ENCODE measurements at regions of chr3 and their contacts with region 1.

Region 1: GRCh38 chr3:148379763-148380382 is 317.8 kb upstream of the AGTR1 start:
- DNase-seq: peak; percentile 23
- H3K4me3 ChIP-seq: no peak overlapping the region
- H3K27ac ChIP-seq: no peak overlapping the region
- H3K27me3 ChIP-seq: no peaks in the 10 kb centered on the region
- CTCF ChIP-seq: peak; percentile 65

Region 2: GRCh38 chr3:147890114-147890513 is 489.8 kb before region 1 on chr3:
- CTCF ChIA-PET with region 1: no interaction called
- POLR2A ChIA-PET with region 1: no interaction called
- DNase-seq: no peak
- H3K4me3 ChIP-seq: no peak overlapping the region
- H3K27ac ChIP-seq: no peak overlapping the region
- H3K27me3 ChIP-seq: no peaks in the 10 kb centered on the region
- CTCF ChIP-seq: no peak

Region 3: DNA sequence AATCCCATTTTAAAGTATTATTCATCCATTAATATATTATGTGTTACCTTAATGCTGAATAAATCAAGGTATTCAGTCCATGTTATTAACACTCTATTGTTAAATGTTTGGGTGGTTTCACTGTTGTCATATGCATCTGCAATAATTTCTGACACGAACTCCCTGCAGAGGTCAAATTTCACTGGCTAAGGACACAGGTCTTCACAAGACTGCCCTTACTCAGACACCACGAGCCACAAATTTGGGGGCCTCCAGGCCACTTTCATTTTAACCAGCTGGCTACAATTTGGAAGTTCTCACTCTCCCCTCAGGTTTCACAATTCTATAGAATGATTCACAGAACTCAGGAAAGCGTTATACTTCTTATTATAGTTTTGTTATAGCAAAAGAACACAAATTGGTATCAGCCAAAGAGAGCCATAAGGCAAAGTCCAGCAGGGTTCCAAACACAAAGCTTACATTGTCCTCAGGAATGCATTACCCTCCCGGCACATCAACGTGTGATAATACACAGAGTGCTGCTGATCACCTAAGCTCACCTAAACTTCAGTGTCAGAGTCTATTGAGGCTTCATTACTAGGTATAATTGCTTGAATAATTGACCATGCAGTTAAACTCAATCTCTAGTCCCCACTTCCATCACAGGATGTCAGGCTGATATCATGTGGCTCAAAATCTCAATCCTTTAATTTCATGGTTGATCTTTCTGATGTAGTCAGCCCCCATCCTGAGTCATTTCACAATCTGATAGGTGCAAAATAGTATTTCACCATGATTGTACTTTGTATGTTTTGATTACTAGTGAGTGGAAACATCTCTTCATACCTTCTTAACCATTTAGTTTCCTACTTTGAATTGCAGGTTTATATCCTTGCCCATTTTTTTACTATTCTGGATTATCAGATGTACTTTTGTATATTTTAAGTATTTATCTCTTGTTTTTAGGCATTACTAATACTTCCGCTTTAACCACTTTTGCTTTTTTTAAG is 123.6 kb before region 1 on chr3:
- CTCF ChIA-PET with region 1: no interaction called
- POLR2A ChIA-PET with region 1: no interaction called
- DNase-seq: no peak
- H3K4me3 ChIP-seq: no peak overlapping the region
- H3K27ac ChIP-seq: no peak overlapping the region
- H3K27me3 ChIP-seq: no peaks in the 10 kb centered on the region
- CTCF ChIP-seq: no peak

Region 4: DNA sequence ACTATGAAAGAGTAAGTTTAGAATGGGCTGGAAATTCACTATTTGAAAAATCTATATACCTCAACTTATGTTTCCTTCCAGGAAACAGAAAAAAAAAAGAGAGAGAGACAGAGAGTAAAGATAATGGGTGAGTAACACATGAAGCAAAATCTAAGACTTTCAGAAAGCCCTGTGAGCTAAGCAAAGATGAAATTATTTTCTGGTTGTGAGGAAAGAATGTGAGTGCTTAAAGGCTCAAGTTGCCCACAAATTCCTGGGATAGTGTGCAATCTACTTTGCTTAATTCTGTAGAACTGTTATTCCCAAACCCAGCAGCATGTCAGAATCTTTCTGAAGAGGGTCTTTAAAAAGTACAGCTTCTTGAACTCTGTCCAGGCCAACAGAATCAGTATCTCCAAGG is 19.8 kb before region 1 on chr3:
- CTCF ChIA-PET with region 1: no interaction called
- POLR2A ChIA-PET with region 1: no interaction called
- DNase-seq: peak; percentile 38
- H3K4me3 ChIP-seq: no peak overlapping the region
- H3K27ac ChIP-seq: no peak overlapping the region
- H3K27me3 ChIP-seq: no peaks in the 10 kb centered on the region
- CTCF ChIP-seq: no peak

Region 5: DNA sequence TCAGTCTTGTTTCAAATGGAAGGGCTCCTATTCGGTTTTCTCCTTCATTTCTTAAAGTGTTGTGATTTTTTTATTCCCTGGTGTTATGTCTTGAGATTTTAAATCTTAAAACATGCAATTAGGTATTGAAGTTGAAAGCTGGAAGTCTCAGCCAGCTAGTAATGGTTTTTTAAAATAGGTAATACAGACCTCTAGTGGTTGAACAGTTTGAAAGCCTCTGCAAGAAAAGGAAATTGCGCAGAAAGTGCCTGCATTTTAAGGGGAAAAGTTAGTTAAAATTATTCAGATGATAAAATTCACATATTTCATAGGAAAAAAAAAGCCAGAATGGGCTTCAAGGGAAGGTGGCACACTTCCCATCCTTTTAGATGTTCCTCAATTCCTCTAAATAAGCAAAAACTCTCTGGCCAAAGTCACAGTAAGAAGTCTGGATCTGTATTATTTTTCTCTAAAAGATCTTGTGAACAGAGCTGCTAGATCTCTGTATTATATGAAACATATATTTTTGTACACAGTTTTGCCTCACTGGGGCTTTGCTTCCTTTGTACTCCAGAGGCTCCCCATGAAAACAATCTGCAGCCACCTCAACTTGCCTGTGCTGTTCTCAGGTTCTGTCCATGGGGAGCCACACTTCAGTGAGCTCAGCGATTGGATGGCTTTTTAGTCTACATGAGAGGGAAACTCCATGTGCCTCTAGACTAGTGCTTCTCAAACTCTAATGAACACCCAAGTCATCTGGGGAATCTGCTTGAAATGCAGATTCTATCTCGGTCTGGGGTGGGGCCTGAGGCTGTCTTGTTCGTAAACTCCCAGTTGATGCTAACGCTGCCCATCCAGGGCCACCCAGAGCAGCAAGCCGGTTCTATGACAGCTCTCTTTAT is 339.3 kb after region 1 on chr3:
- CTCF ChIA-PET with region 1: interaction called, 54 read pairs
- POLR2A ChIA-PET with region 1: no interaction called
- DNase-seq: no peak
- H3K4me3 ChIP-seq: no peak overlapping the region
- H3K27ac ChIP-seq: no peak overlapping the region
- H3K27me3 ChIP-seq: no peaks in the 10 kb centered on the region
- CTCF ChIP-seq: peak; percentile 61

Region 6: GRCh38 chr3:148943506-148944205 is 563.8 kb after region 1 on chr3:
- CTCF ChIA-PET with region 1: interaction called, 39 read pairs
- POLR2A ChIA-PET with region 1: no interaction called
- DNase-seq: peak; percentile 41
- H3K4me3 ChIP-seq: no peak overlapping the region
- H3K27ac ChIP-seq: no peak overlapping the region
- H3K27me3 ChIP-seq: no peaks in the 10 kb centered on the region
- CTCF ChIP-seq: peak; percentile 78

Region 7: GRCh38 chr3:148948913-148949657 is 569.2 kb after region 1 on chr3:
- CTCF ChIA-PET with region 1: interaction called, 39 read pairs
- POLR2A ChIA-PET with region 1: no interaction called
- DNase-seq: no peak
- H3K4me3 ChIP-seq: no peak overlapping the region
- H3K27ac ChIP-seq: no peak overlapping the region
- H3K27me3 ChIP-seq: no peaks in the 10 kb centered on the region
- CTCF ChIP-seq: no peak

Measured in AG04450 (cell line).